Activated naive CD4-positive, alpha-beta T cell treated with anti-CD3 and anti-CD28 coated beads for 36 hours (primary cell): ENCODE measurements at regions of chr12 and their contacts with region 1.

Region 1: GRCh38 chr12:106136263-106136662 is 2.5 kb downstream of the NUAK1 start:
- DNase-seq: peak; percentile 86
- H3K4me3 Mint-ChIP-seq: no peak overlapping the region
- H3K27ac Mint-ChIP-seq: no peak overlapping the region
- H3K4me1 Mint-ChIP-seq: peaks cover 3% of the 10 kb centered on the region
- H3K27me3 Mint-ChIP-seq: peaks cover 57% of the 10 kb centered on the region

Region 2: DNA sequence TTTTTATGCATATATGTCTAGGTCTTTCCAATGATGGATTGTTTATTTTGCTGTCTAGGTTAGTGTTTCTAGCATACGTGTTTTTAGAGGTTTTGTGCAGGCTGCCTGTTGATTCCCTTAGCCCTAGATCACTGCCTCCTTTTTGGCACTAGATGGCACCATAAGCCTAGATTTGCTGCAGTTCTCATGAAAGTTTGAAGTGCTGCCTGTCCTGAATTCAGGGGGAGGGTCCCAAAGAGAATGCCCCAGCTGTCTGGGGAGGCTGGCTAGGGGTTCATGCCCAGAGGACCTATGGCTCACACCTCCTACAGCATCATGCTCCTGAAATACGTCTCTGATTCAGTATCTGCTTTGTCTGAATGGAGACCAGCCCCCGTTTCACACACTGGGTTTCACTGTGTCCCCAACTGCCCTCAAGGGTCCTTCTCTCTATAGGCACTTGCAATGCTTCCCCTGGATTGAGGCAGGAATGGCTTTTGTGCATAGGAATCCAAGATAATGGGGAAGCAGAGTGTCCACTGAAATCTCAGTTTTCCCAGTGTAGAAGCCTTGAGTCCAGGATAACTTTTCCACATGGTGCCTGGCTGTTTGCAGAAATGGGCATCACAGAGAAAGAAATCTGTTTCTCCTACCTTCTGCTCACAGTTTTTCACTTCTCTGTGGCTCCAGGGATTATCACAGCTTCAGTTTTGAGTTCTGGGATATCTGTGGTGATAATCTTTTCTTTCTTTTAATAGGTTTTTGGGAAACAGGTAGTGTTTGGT is 1934.8 kb before region 1 on chr12:
- CTCF ChIA-PET with region 1: no interaction called
- intact Hi-C with region 1: loop called (anchors 10 kb)
- DNase-seq: peak; percentile 64
- H3K4me3 Mint-ChIP-seq: no peak overlapping the region
- H3K27ac Mint-ChIP-seq: no peak overlapping the region
- H3K4me1 Mint-ChIP-seq: peaks cover 2% of the 10 kb centered on the region
- H3K27me3 Mint-ChIP-seq: peaks cover 7% of the 10 kb centered on the region

Region 3: DNA sequence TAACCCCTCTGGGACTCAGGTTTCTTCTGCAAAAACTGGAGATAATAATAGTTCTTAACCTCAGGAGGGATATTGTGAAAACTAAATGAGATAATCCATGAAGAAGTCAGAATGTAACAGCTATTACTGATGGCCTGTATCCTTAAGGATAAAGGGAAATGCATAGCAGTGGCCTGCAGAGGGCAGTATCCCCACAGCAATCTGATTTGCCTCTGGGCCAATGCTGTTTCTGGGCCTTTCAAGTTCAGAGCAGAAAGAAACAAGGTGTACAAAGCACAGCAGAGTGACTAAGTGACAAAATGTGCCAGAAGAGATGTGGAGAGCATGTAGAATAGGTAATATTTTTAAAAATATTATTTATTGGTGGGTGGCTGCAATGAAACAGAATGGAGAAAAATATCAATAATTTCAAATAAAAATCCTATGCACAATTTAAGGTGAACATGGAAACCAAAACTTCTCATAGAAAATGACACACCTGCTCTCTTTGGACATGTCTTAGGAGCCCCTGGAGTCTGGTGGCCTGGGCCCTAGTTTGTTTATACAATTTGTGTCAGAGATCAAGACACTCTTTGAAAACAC is 715.5 kb before region 1 on chr12:
- CTCF ChIA-PET with region 1: interaction called, 41 read pairs
- intact Hi-C with region 1: loop called (anchors 1 kb)
- DNase-seq: peak; percentile 84
- H3K4me3 Mint-ChIP-seq: no peak overlapping the region
- H3K27ac Mint-ChIP-seq: no peak overlapping the region
- H3K4me1 Mint-ChIP-seq: peaks cover 10% of the 10 kb centered on the region
- H3K27me3 Mint-ChIP-seq: no peaks in the 10 kb centered on the region

Region 4: DNA sequence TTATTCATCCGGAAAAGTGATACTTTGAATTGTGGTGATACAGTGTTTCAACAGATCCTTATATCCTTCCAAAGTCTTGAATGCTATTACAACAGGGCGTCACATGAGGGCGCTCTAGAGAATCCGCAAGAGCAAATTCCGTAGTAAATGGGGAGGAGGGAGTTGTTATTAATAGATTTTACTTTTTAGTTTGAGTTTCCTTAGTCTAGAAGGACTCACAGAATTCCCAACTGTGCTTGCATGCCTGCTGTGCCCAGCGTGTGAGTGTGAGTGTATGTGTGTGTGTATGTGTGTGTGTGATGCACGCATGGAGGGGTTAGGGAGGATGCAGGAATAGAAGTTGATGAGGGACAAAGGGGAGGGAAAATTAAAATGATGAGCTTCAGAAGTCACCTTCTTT is 430.5 kb before region 1 on chr12:
- CTCF ChIA-PET with region 1: no interaction called
- intact Hi-C with region 1: loop called (anchors 1 kb)
- DNase-seq: peak; percentile 24
- H3K4me3 Mint-ChIP-seq: no peak overlapping the region
- H3K27ac Mint-ChIP-seq: no peak overlapping the region
- H3K4me1 Mint-ChIP-seq: no peaks in the 10 kb centered on the region
- H3K27me3 Mint-ChIP-seq: peaks cover 4% of the 10 kb centered on the region

Region 5: GRCh38 chr12:106074706-106075392 is 61.4 kb before region 1 on chr12:
- CTCF ChIA-PET with region 1: no interaction called
- intact Hi-C with region 1: no loop called
- DNase-seq: no peak
- H3K4me3 Mint-ChIP-seq: no peak overlapping the region
- H3K27ac Mint-ChIP-seq: no peak overlapping the region
- H3K4me1 Mint-ChIP-seq: no peaks in the 10 kb centered on the region
- H3K27me3 Mint-ChIP-seq: peaks cover 15% of the 10 kb centered on the region

Region 6: GRCh38 chr12:106149096-106149784 is 13.0 kb after region 1 on chr12:
- CTCF ChIA-PET with region 1: interaction called, 13 read pairs
- intact Hi-C with region 1: no loop called
- DNase-seq: peak; percentile 18
- H3K4me3 Mint-ChIP-seq: no peak overlapping the region
- H3K27ac Mint-ChIP-seq: no peak overlapping the region
- H3K4me1 Mint-ChIP-seq: no peaks in the 10 kb centered on the region
- H3K27me3 Mint-ChIP-seq: peaks cover 24% of the 10 kb centered on the region

Region 7: GRCh38 chr12:106282457-106283097 is 146.3 kb after region 1 on chr12:
- CTCF ChIA-PET with region 1: no interaction called
- intact Hi-C with region 1: loop called (anchors 5 kb)
- DNase-seq: peak; percentile 69
- H3K4me3 Mint-ChIP-seq: no peak overlapping the region
- H3K27ac Mint-ChIP-seq: no peak overlapping the region
- H3K4me1 Mint-ChIP-seq: peaks cover 14% of the 10 kb centered on the region
- H3K27me3 Mint-ChIP-seq: peaks cover 4% of the 10 kb centered on the region

Region 8: GRCh38 chr12:106369607-106370346 is 233.5 kb after region 1 on chr12:
- CTCF ChIA-PET with region 1: no interaction called
- intact Hi-C with region 1: no loop called
- DNase-seq: no peak
- H3K4me3 Mint-ChIP-seq: no peak overlapping the region
- H3K27ac Mint-ChIP-seq: no peak overlapping the region
- H3K4me1 Mint-ChIP-seq: no peaks in the 10 kb centered on the region
- H3K27me3 Mint-ChIP-seq: no peaks in the 10 kb centered on the region